ENCODE measurements at regions of chr17 and their contacts with region 1.

Region 1: DNA sequence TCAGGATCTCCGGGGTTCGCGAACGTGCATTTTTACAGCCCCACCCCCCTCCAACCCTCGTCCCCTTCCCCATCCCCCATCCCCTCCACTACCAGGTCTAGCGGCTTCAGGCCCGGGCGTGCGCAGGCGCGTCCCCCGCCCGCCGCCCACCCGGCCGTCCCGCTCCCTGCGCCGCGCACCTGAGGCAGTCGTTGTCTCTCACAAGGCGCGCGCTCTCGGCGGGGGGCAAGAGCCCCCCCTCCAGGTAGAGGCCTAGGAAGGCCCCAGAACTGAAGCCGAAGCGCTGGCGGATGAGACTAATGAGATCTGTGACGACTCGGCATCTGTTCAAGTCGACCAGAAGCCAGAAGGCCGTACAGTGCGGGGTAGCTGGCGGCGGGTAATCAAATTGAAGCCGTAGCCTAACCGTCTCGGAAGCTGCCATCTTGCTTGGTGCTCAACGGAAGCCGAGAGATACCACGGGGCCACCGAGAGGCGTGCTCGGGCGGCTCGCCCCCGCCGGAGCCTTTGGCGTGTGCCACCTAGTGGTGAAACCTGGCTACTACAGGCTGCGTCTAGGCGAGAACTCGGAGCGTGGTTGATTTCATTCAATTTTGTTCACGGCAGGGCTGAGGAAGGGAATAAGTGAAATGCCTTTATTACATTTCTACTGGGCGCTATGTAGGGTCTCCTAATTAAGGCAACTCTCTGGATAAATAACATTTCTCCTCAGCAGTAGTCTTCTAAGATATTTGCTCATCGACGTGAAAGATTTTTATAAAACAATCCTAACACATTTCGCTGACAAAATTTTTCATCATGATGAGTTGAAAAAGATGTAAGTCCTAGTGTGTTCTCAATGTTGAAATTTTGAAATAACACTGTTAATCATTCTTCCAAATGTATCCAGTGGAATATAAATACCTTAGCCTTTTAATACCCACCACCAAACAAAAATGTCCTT is at the start of gene COIL:
- DNase-seq: peak; percentile 92 to 96
- ATAC-seq: peak; percentile 97 to 99
- H3K4me3 ChIP-seq: peak within 1 kb of the TSS; percentile 75
- H3K27ac ChIP-seq: peak within 1 kb of the TSS; percentile 91 to 92
- H3K4me1 ChIP-seq: peaks cover 17% of the 10 kb centered on the region; the same call in 2 of the 3 replicates
- CTCF ChIP-seq: peak; percentile 94
- EP300 ChIP-seq: no peak
- POLR2A ChIP-seq: peak; percentile 69
- RAD21 ChIP-seq: peak; percentile 64 to 73
- polyA plus RNA-seq, gene COIL: 13.5 and 16.9 TPM in 2 replicates

Region 2: GRCh38 chr17:56948491-56948890 is 12.4 kb before region 1 on chr17:
- CTCF ChIA-PET with region 1: interaction called, 14 read pairs
- POLR2A ChIA-PET with region 1: no interaction called
- DNase-seq: no peak
- ATAC-seq: no peak
- H3K4me3 ChIP-seq: no peak overlapping the region
- H3K27ac ChIP-seq: no peak overlapping the region
- H3K4me1 ChIP-seq: peaks cover 1% of the 10 kb centered on the region; the same call in 1 of the 3 replicates
- CTCF ChIP-seq: no peak
- EP300 ChIP-seq: no peak
- POLR2A ChIP-seq: no peak
- RAD21 ChIP-seq: no peak

Region 3: GRCh38 chr17:56976941-56977608 is 16.2 kb after region 1 on chr17:
- CTCF ChIA-PET with region 1: interaction called, 10 read pairs
- POLR2A ChIA-PET with region 1: interaction called, 6 read pairs
- DNase-seq: no peak
- ATAC-seq: no peak
- H3K4me3 ChIP-seq: peak overlapping the region; percentile 51
- H3K27ac ChIP-seq: no peak overlapping the region; a peak in 1 of 6 replicates
- H3K4me1 ChIP-seq: peaks cover 11% of the 10 kb centered on the region; the same call in 1 of the 3 replicates
- CTCF ChIP-seq: no peak
- EP300 ChIP-seq: no peak
- POLR2A ChIP-seq: no peak
- RAD21 ChIP-seq: no peak